CD14-positive monocyte (primary cell): ENCODE measurements at regions of chr5 and their contacts with region 1.

Region 1: GRCh38 chr5:157342822-157343402 is 77.0 kb downstream of the CYFIP2 start:
- DNase-seq: peak in 2 of 3 donors; percentile 6 to 25
- H3K4me3 ChIP-seq: no peak overlapping the region
- H3K4me3 Mint-ChIP-seq: no peak overlapping the region
- H3K27ac ChIP-seq: no peak overlapping the region
- H3K27ac Mint-ChIP-seq: peak overlapping the region in 1 of 7 donors; percentile 23
- H3K4me1 ChIP-seq: no peaks in the 10 kb centered on the region
- H3K4me1 Mint-ChIP-seq: no peaks in the 10 kb centered on the region
- H3K27me3 ChIP-seq: no peaks in the 10 kb centered on the region
- H3K27me3 Mint-ChIP-seq: peaks cover 0 to 1% (median 0%) of the 10 kb centered on the region in 3 donors
- CTCF ChIP-seq: peak; percentile 68

Region 2: DNA sequence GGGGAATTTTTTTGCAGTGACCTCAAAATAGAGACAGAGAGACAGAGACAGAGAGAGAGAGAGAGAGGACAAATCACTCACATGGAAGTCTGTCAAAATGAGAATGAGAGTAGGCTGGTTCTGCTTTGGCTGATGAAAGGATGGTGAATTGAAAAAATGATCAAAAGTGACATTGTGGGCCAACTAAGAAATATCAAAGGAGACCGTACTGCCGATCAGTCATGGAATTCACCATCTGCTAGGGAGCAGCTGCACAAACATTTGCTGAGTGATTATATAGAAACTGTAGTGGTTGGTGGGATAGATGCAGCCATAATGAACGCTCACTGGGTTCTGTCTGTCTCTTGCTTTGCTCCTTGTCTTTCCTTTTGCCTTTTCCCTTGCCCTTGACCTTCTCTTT is 1492.5 kb before region 1 on chr5:
- intact Hi-C with region 1: no loop called
- DNase-seq: no peak
- H3K4me3 ChIP-seq: no peak overlapping the region
- H3K4me3 Mint-ChIP-seq: no peak overlapping the region
- H3K27ac ChIP-seq: no peak overlapping the region
- H3K27ac Mint-ChIP-seq: no peak overlapping the region
- H3K4me1 ChIP-seq: no peaks in the 10 kb centered on the region
- H3K4me1 Mint-ChIP-seq: no peaks in the 10 kb centered on the region
- H3K27me3 ChIP-seq: no peaks in the 10 kb centered on the region
- H3K27me3 Mint-ChIP-seq: peaks cover 0 to 2% (median 0%) of the 10 kb centered on the region in 3 donors
- CTCF ChIP-seq: no peak

Region 3: GRCh38 chr5:157233515-157233914 is 109.4 kb before region 1 on chr5:
- intact Hi-C with region 1: no loop called
- DNase-seq: no peak
- H3K4me3 ChIP-seq: no peak overlapping the region
- H3K4me3 Mint-ChIP-seq: no peak overlapping the region
- H3K27ac ChIP-seq: no peak overlapping the region
- H3K27ac Mint-ChIP-seq: no peak overlapping the region
- H3K4me1 ChIP-seq: no peaks in the 10 kb centered on the region
- H3K4me1 Mint-ChIP-seq: no peaks in the 10 kb centered on the region
- H3K27me3 ChIP-seq: no peaks in the 10 kb centered on the region
- H3K27me3 Mint-ChIP-seq: no peaks in the 10 kb centered on the region
- CTCF ChIP-seq: no peak

Region 4: DNA sequence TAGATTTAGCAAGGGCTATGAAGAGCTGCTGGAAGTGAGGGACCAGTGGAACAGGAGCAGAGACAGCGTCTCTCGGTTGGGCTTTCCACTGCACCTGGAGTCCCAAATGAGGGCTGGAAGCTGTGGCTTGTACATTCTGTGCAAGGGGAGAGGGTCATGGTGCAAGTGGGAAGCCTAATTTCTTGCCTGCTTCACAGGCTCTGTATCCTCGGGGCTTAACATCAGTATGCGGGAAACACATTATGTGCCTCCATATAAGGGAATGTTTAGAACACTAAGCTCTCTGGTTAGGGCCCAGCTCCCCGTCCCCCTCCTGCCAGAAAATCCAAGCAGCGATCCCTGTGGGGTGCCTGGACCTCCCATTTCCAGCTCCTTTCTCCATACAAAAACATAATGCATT is 28.1 kb after region 1 on chr5:
- intact Hi-C with region 1: no loop called
- DNase-seq: no peak
- H3K4me3 ChIP-seq: no peak overlapping the region
- H3K4me3 Mint-ChIP-seq: no peak overlapping the region
- H3K27ac ChIP-seq: no peak overlapping the region
- H3K27ac Mint-ChIP-seq: no peak overlapping the region
- H3K4me1 ChIP-seq: no peaks in the 10 kb centered on the region
- H3K4me1 Mint-ChIP-seq: no peaks in the 10 kb centered on the region
- H3K27me3 ChIP-seq: no peaks in the 10 kb centered on the region
- H3K27me3 Mint-ChIP-seq: peaks cover 0 to 2% (median 0%) of the 10 kb centered on the region in 3 donors
- CTCF ChIP-seq: no peak

Region 5: DNA sequence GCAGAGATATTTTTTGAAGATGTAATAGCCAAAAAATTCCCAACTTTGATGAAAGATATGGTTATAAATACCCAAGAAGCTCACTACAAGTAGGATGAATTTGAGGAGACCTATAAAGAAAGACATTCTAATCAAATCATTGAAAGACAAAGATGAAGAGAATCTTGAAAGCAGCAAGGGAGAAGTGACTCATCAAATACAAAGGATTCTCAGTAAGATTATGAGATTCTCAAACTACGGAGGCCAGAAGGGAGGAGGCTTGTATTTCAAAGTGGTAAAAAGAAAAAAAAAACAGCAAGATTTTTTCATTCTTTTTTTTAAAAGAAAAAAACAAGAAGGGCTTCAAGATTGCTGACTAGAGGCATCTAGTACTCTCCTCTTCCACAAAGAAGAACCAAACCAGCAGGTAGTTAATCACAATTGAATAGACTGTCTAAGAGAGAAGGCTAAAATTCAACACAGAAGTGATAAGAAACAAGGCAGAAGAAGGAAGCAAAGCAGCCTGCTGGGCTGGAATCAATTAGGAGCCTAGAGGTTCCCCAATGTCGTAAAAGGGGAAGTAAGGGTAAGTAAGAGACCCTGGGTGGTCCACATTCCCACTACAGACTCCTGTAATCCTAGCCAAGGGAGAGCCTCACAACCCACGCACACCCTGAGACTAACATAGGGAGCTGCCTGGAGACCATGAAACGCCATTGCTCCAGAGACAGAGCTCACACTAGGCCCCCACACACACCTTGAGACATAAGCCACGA is 58.0 kb after region 1 on chr5:
- intact Hi-C with region 1: no loop called
- DNase-seq: no peak
- H3K4me3 ChIP-seq: no peak overlapping the region
- H3K4me3 Mint-ChIP-seq: no peak overlapping the region
- H3K27ac ChIP-seq: no peak overlapping the region
- H3K27ac Mint-ChIP-seq: no peak overlapping the region
- H3K4me1 ChIP-seq: no peaks in the 10 kb centered on the region
- H3K4me1 Mint-ChIP-seq: no peaks in the 10 kb centered on the region
- H3K27me3 ChIP-seq: no peaks in the 10 kb centered on the region
- H3K27me3 Mint-ChIP-seq: no peaks in the 10 kb centered on the region
- CTCF ChIP-seq: no peak

Region 6: GRCh38 chr5:157415838-157416237 is 72.9 kb after region 1 on chr5:
- intact Hi-C with region 1: loop called in 1 of 2 experiments (anchors 10 kb)
- DNase-seq: no peak
- H3K4me3 ChIP-seq: no peak overlapping the region
- H3K4me3 Mint-ChIP-seq: no peak overlapping the region
- H3K27ac ChIP-seq: no peak overlapping the region
- H3K27ac Mint-ChIP-seq: no peak overlapping the region
- H3K4me1 ChIP-seq: no peaks in the 10 kb centered on the region
- H3K4me1 Mint-ChIP-seq: no peaks in the 10 kb centered on the region
- H3K27me3 ChIP-seq: no peaks in the 10 kb centered on the region
- H3K27me3 Mint-ChIP-seq: peaks cover 0 to 2% (median 0%) of the 10 kb centered on the region in 3 donors
- CTCF ChIP-seq: no peak